GM12878 (cell line): ENCODE measurements at regions of chr1 and their contacts with region 1.

Region 1: GRCh38 chr1:157505481-157506272 is 46.6 kb downstream of the FCRL5 start:
- DNase-seq: peak; percentile 59
- ATAC-seq: peak; percentile 99
- H3K4me3 ChIP-seq: 0 out of 2 replicates have a peak overlapping the region, but pooled peaks have one; percentile 26
- H3K27ac ChIP-seq: peak overlapping the region; percentile 48
- H3K4me1 ChIP-seq: peaks cover 31% of the 10 kb centered on the region
- H3K27me3 ChIP-seq: no peaks in the 10 kb centered on the region
- CTCF ChIP-seq: peak; percentile 86 to 91 (median 86)
- EP300 ChIP-seq: no peak
- POLR2A ChIP-seq: no peak
- RAD21 ChIP-seq: peak; percentile 90

Region 2: DNA sequence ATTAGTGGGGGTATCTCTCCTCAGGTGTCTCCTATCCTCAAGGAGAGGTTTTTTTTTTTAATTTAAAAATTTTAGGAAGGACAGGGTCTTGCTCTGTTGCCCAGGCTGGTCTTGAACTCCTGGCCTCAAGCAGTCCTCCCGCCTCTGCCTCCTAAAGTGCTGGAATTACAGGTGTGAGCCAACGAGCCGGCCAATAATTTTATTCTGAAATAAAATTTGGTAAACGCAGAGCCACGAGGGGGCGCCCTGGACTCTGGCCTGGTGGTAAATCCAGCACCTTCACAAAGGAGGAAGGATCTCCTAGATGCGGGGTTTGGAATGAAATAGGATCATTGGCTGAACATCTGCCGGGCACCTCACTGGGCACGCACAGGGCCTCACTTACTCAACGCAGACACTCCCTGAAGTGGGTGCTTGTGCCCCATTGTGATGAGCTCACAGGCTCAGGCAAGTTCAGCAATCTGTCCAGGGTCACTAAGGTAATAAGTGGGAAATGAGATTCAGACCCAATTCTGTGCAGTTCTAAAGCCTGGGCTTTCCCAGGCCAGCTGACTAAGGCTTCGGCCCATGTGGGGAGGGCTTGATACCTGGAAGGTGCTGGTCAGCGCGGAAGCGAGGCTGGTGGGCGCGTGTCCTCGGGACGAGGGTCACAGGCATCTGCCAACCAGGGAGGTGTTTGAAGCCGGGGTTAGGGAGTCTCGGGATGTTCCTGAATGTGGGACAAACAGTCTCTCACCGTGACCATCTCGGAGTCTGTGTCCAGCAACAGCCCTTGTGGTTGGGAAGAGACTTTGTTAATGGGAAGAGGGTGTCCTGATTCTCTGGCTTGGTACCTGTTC is 334.8 kb before region 1 on chr1:
- CTCF ChIA-PET with region 1: interaction called, 13 read pairs
- POLR2A ChIA-PET with region 1: no interaction called
- RAD21 ChIA-PET with region 1: no interaction called
- SMC1A ChIA-PET with region 1: interaction called, 5 read pairs
- in situ Hi-C with region 1: no loop called
- intact Hi-C with region 1: no loop called
- DNase-seq: no peak
- ATAC-seq: no peak; the same call in 2 of the 3 replicates
- H3K4me3 ChIP-seq: no peak overlapping the region
- H3K27ac ChIP-seq: no peak overlapping the region
- H3K4me1 ChIP-seq: peaks cover 43% of the 10 kb centered on the region
- H3K27me3 ChIP-seq: no peaks in the 10 kb centered on the region
- CTCF ChIP-seq: peak; percentile 49 to 67 (median 59)
- EP300 ChIP-seq: no peak
- POLR2A ChIP-seq: no peak
- RAD21 ChIP-seq: peak; percentile 35

Region 3: GRCh38 chr1:157199421-157199755 is 306.3 kb before region 1 on chr1:
- CTCF ChIA-PET with region 1: interaction called, 21 read pairs
- POLR2A ChIA-PET with region 1: no interaction called
- RAD21 ChIA-PET with region 1: interaction called, 3 read pairs
- SMC1A ChIA-PET with region 1: interaction called, 5 read pairs
- in situ Hi-C with region 1: no loop called
- intact Hi-C with region 1: no loop called
- DNase-seq: no peak
- ATAC-seq: no peak; the same call in 1 of the 3 replicates
- H3K4me3 ChIP-seq: no peak overlapping the region
- H3K27ac ChIP-seq: no peak overlapping the region
- H3K4me1 ChIP-seq: no peaks in the 10 kb centered on the region
- H3K27me3 ChIP-seq: no peaks in the 10 kb centered on the region
- CTCF ChIP-seq: no peak
- EP300 ChIP-seq: no peak
- POLR2A ChIP-seq: no peak
- RAD21 ChIP-seq: no peak

Region 4: DNA sequence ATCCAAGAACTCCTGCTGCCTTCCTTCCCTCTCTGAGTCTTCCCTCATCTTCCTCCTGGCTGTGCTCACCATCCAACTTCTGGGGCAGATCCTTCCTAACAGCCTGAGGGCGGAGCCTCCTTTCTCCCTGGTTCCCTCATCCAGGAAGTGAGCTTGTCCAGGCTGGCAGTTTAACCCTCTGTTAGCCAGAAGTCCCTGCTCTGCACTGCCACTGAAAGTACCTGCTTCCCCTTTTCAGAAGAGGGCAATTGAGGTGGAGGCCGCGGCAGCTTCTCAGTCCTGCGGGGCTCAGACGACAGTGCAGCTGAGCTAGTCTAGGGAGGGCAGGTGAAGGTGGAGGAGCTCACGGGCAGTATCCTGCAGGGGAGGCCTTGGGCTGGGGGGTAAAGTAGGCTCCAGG is 102.5 kb before region 1 on chr1:
- CTCF ChIA-PET with region 1: interaction called, 31 read pairs
- POLR2A ChIA-PET with region 1: no interaction called
- RAD21 ChIA-PET with region 1: interaction called, 3 read pairs
- SMC1A ChIA-PET with region 1: interaction called, 5 read pairs
- in situ Hi-C with region 1: no loop called
- intact Hi-C with region 1: no loop called
- DNase-seq: no peak
- ATAC-seq: peak; percentile 89
- H3K4me3 ChIP-seq: no peak overlapping the region
- H3K27ac ChIP-seq: no peak overlapping the region
- H3K4me1 ChIP-seq: peaks cover 27% of the 10 kb centered on the region
- H3K27me3 ChIP-seq: no peaks in the 10 kb centered on the region; a peak in 1 of 4 replicates
- CTCF ChIP-seq: no peak
- EP300 ChIP-seq: peak; percentile 39 to 65; a peak in 2 of 4 replicates
- POLR2A ChIP-seq: no peak
- RAD21 ChIP-seq: no peak

Region 5: DNA sequence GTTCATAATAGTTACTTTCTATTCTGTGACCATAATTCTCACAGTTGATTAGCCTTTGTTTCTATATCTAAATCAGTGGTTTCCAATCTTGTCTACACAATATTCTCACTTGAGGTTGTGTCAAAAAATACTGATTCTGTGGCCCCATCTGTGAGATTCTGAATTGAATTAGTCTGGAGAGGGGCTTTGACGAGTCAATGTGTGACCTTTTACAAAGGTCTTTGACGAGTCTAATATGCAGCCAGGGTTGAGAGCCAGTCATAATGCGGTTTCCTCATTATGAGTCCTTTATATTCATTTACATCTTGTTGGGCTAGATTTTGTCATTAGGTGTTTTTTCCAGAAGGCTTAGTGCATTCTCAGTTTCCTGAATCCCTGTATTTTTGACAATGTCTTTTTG is 26.9 kb after region 1 on chr1:
- CTCF ChIA-PET with region 1: interaction called, 10 read pairs
- POLR2A ChIA-PET with region 1: interaction called, 3 read pairs
- RAD21 ChIA-PET with region 1: interaction called, 5 read pairs
- SMC1A ChIA-PET with region 1: interaction called, 3 read pairs
- in situ Hi-C with region 1: no loop called
- intact Hi-C with region 1: no loop called
- DNase-seq: no peak
- ATAC-seq: peak; percentile 58
- H3K4me3 ChIP-seq: no peak overlapping the region
- H3K27ac ChIP-seq: no peak overlapping the region
- H3K4me1 ChIP-seq: no peaks in the 10 kb centered on the region
- H3K27me3 ChIP-seq: no peaks in the 10 kb centered on the region
- CTCF ChIP-seq: no peak
- EP300 ChIP-seq: no peak
- POLR2A ChIP-seq: no peak
- RAD21 ChIP-seq: no peak

Region 6: DNA sequence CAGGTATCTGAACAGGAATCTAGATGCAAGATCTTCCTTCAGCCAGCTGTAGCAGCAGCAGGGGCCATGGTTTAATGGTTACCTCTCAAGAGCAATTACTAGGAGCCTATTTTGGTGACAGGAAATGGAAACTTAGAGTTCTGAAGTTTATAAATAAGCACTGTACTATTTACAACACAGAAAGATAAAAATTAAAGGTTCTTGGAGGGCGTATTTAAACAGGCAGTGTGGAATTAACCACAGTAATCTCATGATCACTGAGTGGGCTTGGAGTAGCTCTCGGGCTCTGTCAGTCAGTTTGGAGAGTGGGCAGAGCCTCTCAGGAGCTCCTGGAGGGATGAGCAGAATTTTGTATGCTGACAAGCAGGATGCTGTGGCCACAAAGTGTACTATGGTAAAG is 56.8 kb after region 1 on chr1:
- CTCF ChIA-PET with region 1: interaction called, 33 read pairs
- POLR2A ChIA-PET with region 1: interaction called, 40 read pairs
- RAD21 ChIA-PET with region 1: interaction called, 179 read pairs
- SMC1A ChIA-PET with region 1: interaction called, 157 read pairs
- in situ Hi-C with region 1: no loop called
- intact Hi-C with region 1: loop called (anchors 5 kb)
- DNase-seq: peak; percentile 63
- ATAC-seq: peak; percentile 83
- H3K4me3 ChIP-seq: peak overlapping the region; percentile 40; the same call in 1 of the 2 replicates
- H3K27ac ChIP-seq: 0 out of 2 replicates have a peak overlapping the region, but pooled peaks have one; percentile 1
- H3K4me1 ChIP-seq: peaks cover 23% of the 10 kb centered on the region
- H3K27me3 ChIP-seq: no peaks in the 10 kb centered on the region
- CTCF ChIP-seq: no peak
- EP300 ChIP-seq: peak; percentile 47 to 83; a peak in 1 of 4 replicates
- POLR2A ChIP-seq: no peak
- RAD21 ChIP-seq: no peak